ENCODE measurements at regions of chr4 and their contacts with region 1.

Region 1: DNA sequence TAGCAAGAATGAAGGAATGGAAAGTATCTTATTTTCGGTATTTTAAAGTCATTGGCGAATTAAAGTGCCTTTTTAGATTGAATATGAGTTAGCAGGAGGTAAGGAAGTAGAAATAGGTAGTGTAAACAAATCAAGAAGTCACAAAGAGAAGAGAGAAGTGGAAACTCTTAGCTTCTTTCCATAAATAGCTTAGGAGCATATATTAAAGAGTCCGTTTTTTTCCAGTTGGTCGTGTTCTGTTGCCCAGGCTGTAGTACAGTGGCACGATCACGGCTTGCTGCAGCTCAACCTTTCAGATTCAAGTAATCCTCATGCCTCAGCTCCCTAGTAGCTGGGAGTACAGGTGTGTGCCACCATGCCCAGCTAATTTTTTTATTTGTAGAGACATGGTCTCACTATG is 56.4 kb downstream of the UBE2K start:
- DNase-seq: no peak
- ATAC-seq: no peak; the same call in 1 of the 3 replicates
- H3K4me3 ChIP-seq: no peak overlapping the region
- H3K27ac ChIP-seq: peak overlapping the region; percentile 43; the same call in 1 of the 2 replicates
- H3K4me1 ChIP-seq: peaks cover 13% of the 10 kb centered on the region
- H3K27me3 ChIP-seq: no peaks in the 10 kb centered on the region
- CTCF ChIP-seq: no peak
- EP300 ChIP-seq: no peak
- POLR2A ChIP-seq: no peak
- RAD21 ChIP-seq: no peak

Region 2: GRCh38 chr4:39801975-39802374 is 47.7 kb after region 1 on chr4:
- CTCF ChIA-PET with region 1: no interaction called
- POLR2A ChIA-PET with region 1: interaction called, 11 read pairs
- RAD21 ChIA-PET with region 1: no interaction called
- SMC1A ChIA-PET with region 1: interaction called, 3 read pairs
- in situ Hi-C with region 1: no loop called
- intact Hi-C with region 1: no loop called
- DNase-seq: no peak
- ATAC-seq: no peak
- H3K4me3 ChIP-seq: no peak overlapping the region
- H3K27ac ChIP-seq: no peak overlapping the region
- H3K4me1 ChIP-seq: no peaks in the 10 kb centered on the region
- H3K27me3 ChIP-seq: no peaks in the 10 kb centered on the region
- CTCF ChIP-seq: no peak
- EP300 ChIP-seq: no peak
- POLR2A ChIP-seq: no peak
- RAD21 ChIP-seq: no peak

Region 3: GRCh38 chr4:39883646-39884045 is 129.3 kb after region 1 on chr4:
- CTCF ChIA-PET with region 1: no interaction called
- POLR2A ChIA-PET with region 1: interaction called, 10 read pairs
- RAD21 ChIA-PET with region 1: no interaction called
- SMC1A ChIA-PET with region 1: no interaction called
- in situ Hi-C with region 1: no loop called
- intact Hi-C with region 1: no loop called
- DNase-seq: no peak
- ATAC-seq: no peak
- H3K4me3 ChIP-seq: no peak overlapping the region
- H3K27ac ChIP-seq: no peak overlapping the region
- H3K4me1 ChIP-seq: no peaks in the 10 kb centered on the region
- H3K27me3 ChIP-seq: no peaks in the 10 kb centered on the region
- CTCF ChIP-seq: no peak
- EP300 ChIP-seq: no peak
- POLR2A ChIP-seq: no peak
- RAD21 ChIP-seq: no peak

Region 4: DNA sequence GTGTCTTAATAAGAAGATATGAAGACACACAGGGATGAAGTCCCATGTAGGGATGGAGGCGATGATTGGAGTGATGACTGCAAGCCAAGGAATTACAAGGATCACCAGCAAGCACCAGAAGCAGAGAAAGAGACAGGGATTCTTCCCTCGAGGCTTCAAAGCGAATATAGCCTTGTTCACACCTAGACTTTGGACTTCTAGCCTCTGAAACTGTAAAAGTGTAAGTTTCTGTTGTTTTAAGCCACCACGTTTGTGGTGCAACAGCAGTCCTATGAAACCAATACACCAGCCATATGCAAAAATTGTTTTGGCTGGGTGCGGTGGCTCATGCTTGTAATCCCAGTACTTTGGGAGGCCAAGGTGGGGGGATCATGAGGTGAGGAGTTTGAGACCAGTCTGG is 233.2 kb after region 1 on chr4:
- CTCF ChIA-PET with region 1: no interaction called
- POLR2A ChIA-PET with region 1: no interaction called
- RAD21 ChIA-PET with region 1: no interaction called
- SMC1A ChIA-PET with region 1: no interaction called
- in situ Hi-C with region 1: no loop called
- intact Hi-C with region 1: no loop called
- DNase-seq: no peak
- ATAC-seq: peak; percentile 77
- H3K4me3 ChIP-seq: no peak overlapping the region
- H3K27ac ChIP-seq: no peak overlapping the region
- H3K4me1 ChIP-seq: 0 out of 2 replicates have a peak, but pooled peaks cover 3% of the 10 kb centered on the region
- H3K27me3 ChIP-seq: no peaks in the 10 kb centered on the region
- CTCF ChIP-seq: no peak
- EP300 ChIP-seq: no peak
- POLR2A ChIP-seq: no peak
- RAD21 ChIP-seq: no peak

Region 5: GRCh38 chr4:40086421-40086820 is 332.1 kb after region 1 on chr4:
- CTCF ChIA-PET with region 1: no interaction called
- POLR2A ChIA-PET with region 1: no interaction called
- RAD21 ChIA-PET with region 1: no interaction called
- SMC1A ChIA-PET with region 1: no interaction called
- in situ Hi-C with region 1: no loop called
- intact Hi-C with region 1: no loop called
- DNase-seq: no peak
- ATAC-seq: no peak
- H3K4me3 ChIP-seq: no peak overlapping the region
- H3K27ac ChIP-seq: no peak overlapping the region
- H3K4me1 ChIP-seq: no peaks in the 10 kb centered on the region
- H3K27me3 ChIP-seq: no peaks in the 10 kb centered on the region
- CTCF ChIP-seq: no peak
- EP300 ChIP-seq: no peak
- POLR2A ChIP-seq: no peak
- RAD21 ChIP-seq: no peak

Measured in GM12878 (cell line).